GM23248 (cell line): ENCODE measurements at regions of chr20 and their contacts with region 1.

Region 1: DNA sequence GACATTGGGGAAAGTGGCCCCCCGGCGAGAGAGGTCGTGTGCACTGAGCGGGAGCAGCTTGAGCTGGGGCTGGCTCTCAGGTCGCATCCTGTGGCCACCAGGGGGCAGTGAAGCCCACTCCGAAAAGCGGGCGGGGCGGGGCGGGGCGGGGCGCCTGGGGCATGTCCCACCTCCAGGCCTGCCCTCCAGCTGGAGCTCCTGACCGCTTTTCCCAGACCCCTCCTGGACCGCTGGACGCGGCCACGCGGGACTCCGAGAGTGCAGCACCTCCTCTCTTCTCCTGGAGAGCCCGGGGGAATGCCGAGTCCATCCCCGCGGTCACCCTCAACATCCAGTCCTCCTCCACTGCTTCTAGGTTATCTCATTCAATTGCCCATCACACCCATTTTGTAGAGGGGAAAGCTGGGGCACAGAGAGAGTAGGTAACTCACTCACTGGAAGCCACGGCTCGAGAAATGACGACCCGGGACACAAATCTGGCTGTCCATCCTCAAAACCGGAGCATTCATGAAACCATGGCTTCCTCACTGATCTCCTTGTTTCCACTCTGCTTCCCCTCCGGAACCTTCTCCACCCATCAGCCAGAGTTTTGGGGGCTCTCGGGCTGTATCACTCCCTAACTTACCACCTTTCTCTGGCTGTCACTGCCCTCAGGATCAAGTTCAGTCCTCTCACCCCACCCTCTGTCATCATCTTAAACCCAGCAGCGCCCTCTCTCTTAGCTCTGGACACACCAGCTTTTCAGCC is 24.1 kb downstream of the COX4I2 start:
- DNase-seq: peak; percentile 86
- H3K4me3 ChIP-seq: peak overlapping the region; percentile 72
- H3K27ac ChIP-seq: peak overlapping the region; percentile 59
- H3K4me1 ChIP-seq: 0 out of 2 replicates have a peak, but pooled peaks cover 9% of the 10 kb centered on the region
- H3K27me3 ChIP-seq: no peaks in the 10 kb centered on the region

Region 2: DNA sequence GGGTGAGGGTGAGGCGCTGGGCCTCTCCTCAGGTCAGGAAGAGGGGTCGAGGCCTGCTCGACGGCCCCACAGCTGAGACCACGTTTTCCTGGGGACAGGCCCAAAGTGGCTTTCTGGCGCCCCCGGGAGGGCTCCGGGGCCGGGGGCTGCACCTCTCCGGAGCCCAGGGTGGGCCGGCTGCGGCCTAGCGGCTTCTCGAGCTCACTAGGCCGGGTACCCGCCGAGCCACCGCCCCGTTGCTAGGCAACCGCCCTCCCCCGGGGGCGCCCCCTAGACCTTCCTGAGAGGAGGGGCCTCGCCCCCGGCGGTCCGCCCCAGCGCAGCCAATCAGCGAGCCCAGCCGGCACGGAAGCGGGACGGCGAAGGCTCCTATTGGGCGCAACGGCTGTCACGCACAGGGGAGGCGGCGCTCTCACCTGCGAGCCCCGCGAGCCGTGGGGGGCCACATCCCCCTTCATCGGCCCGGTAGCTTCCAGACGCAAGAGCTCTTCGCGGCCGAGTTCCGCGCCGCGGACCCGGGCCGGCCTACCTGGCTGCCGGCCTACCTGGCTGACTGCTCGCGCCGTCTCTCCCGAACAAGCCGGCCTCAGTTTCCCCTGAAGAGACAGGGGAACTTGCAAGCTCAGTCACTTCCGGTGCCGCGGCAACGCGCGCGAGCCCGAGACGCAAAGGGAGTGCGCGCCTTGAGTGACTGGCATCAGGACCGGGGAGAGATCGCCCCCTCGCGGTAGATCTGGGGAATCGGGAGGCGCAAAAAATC is 61.7 kb after region 1 on chr20:
- in situ Hi-C with region 1: loop called (anchors 10 kb)
- DNase-seq: peak; percentile 97
- H3K4me3 ChIP-seq: peak overlapping the region; percentile 86
- H3K27ac ChIP-seq: peak overlapping the region; percentile 96
- H3K4me1 ChIP-seq: peaks cover 42% of the 10 kb centered on the region
- H3K27me3 ChIP-seq: no peaks in the 10 kb centered on the region